Breast epithelium (tissue), 4 donors: ENCODE measurements at regions of chr7 and their contacts with region 1.

Region 1: GRCh38 chr7:92325858-92326257 is 80.1 kb downstream of the ANKIB1 start:
- DNase-seq: no peak
- H3K4me3 ChIP-seq: no peak overlapping the region
- H3K27ac ChIP-seq: no peak overlapping the region
- H3K4me1 ChIP-seq: no peaks in the 10 kb centered on the region
- H3K27me3 ChIP-seq: no peaks in the 10 kb centered on the region
- CTCF ChIP-seq: no peak
- POLR2A ChIP-seq: no peak

Region 2: DNA sequence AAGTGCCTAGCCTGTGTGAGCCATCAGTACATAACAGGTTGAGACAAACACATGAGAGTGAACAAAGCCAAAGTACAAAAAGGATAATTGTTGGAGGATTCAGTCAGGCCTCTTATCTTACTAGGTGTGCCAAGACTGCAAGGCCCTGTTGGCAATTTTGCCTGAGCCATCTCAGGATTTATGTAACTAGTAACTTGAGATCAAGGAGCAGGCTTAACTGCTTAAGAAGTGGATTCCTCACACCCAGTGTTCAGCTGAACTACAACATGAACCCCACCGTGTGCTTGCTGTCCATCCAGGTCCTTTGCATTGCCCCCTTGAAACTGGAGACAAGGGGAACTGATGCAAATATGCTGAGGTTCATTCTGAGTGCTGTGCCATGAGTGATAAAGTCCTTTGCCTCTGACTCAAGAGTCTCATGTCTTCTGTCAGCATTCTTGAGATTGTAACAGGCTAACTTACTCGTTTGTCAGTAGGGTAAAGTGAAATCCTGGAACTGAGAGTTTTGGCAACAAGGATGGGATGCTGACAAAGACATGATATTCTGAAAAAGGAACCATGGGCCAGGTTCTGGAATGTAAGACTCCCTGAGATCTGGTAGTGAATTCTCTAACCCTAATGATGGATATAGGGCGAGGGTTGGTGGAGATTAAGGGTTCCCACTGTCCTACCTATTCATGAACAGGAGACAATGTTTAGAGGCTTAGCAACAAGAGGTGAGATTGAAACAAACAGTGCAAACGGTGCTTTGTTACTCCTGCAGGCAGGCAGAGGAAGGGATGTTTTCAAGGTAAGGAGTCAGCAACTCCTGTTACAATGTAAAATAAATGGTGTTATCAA is 77.3 kb after region 1 on chr7:
- intact Hi-C with region 1: loop called (anchors 2 kb)
- DNase-seq: no peak
- H3K4me3 ChIP-seq: no peak overlapping the region
- H3K27ac ChIP-seq: no peak overlapping the region
- H3K4me1 ChIP-seq: no peaks in the 10 kb centered on the region
- H3K27me3 ChIP-seq: no peaks in the 10 kb centered on the region
- CTCF ChIP-seq: no peak
- POLR2A ChIP-seq: no peak

Region 3: DNA sequence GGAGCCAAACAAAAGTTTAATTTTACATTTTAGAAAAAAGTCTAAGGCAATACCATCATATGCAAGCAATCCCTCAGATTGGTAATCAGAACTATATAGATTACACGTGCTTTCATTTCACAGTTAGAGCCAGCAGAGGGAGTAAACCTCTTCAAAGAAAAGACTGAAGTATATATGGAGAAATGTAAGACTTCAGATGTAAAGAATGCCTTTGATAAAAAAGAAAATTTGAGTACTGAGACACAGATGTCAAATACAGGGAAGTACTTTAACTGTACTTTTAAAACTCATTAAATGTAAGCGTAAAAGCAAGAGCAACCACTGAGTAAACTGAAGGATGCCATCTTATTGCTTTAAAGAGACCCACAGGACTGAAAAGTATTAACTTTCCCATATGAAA is 365.7 kb after region 1 on chr7:
- intact Hi-C with region 1: no loop called
- DNase-seq: no peak
- H3K4me3 ChIP-seq: no peak overlapping the region
- H3K27ac ChIP-seq: no peak overlapping the region
- H3K4me1 ChIP-seq: no peaks in the 10 kb centered on the region
- H3K27me3 ChIP-seq: no peaks in the 10 kb centered on the region
- CTCF ChIP-seq: peak in 2 of 3 donors; percentile 27 to 42
- POLR2A ChIP-seq: no peak

Region 4: GRCh38 chr7:92875719-92876118 is 549.9 kb after region 1 on chr7:
- intact Hi-C with region 1: no loop called
- DNase-seq: no peak
- H3K4me3 ChIP-seq: no peak overlapping the region
- H3K27ac ChIP-seq: no peak overlapping the region
- H3K4me1 ChIP-seq: no peaks in the 10 kb centered on the region
- H3K27me3 ChIP-seq: no peaks in the 10 kb centered on the region
- CTCF ChIP-seq: no peak
- POLR2A ChIP-seq: no peak